GM18951 (cell line): ENCODE measurements at regions of chr4 and their contacts with region 1.

Region 1: DNA sequence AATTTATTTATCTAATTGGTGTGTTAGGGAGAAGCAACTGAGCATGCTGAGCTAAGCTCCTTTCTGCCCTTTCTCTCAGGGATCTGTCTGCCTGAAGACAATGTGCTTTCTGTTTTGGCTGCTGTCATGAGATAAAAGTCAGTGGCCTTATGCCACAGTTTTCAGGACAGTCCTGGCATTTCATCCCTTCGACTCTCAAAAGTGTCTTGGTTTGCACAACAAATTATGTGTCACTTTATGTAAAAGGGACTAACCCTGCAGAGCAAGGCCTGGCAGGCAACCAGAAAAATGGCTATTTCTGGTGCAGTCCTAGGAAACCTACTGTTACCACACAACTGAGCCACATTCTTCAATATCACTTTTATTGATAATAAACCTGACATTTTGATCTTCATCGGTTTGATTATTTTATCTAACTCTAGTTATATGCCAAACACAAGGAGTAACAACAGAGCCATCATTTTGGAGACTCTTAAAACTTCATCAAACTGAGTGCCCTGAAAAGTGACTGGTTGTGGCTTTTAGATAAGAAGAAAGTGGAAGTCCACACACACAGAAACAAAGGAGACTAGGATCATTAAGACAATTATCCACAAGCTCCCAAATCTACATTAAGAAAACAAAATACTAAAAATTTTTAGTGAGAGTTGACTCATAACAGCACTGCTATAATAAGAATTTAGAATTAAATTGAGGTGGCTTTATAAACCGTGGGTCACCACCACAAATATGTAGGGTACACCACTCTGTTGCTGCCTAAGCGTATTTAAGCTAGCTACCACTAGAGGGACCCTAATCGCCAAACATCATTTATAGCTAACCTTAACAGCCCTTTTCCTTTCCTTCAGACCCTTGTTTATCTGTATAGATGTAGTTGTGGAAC is 95.9 kb upstream of the PTPN13 start:
- POLR2A ChIP-seq: no peak

Region 2: GRCh38 chr4:86398187-86398586 is 100.0 kb before region 1 on chr4:
- in situ Hi-C with region 1: no loop called
- POLR2A ChIP-seq: no peak

Region 3: GRCh38 chr4:86451560-86452325 is 46.5 kb before region 1 on chr4:
- in situ Hi-C with region 1: no loop called
- POLR2A ChIP-seq: no peak

Region 4: GRCh38 chr4:86891766-86892635 is 393.8 kb after region 1 on chr4 and contains the start of gene C4orf36:
- in situ Hi-C with region 1: loop called (anchors 5 kb)
- POLR2A ChIP-seq: no peak